Activated CD4-positive, alpha-beta memory T cell treated with anti-CD3 and anti-CD28 coated beads for 36 hours (primary cell): ENCODE measurements at regions of chr11 and their contacts with region 1.

Region 1: GRCh38 chr11:76721755-76722677 is 51.5 kb upstream of the LRRC32 start:
- DNase-seq: peak; percentile 85
- H3K4me3 Mint-ChIP-seq: no peak overlapping the region
- H3K27ac Mint-ChIP-seq: no peak overlapping the region
- H3K4me1 Mint-ChIP-seq: peaks cover 9% of the 10 kb centered on the region
- H3K27me3 Mint-ChIP-seq: peaks cover 10% of the 10 kb centered on the region

Region 2: GRCh38 chr11:76734456-76735420 is 12.7 kb after region 1 on chr11:
- CTCF ChIA-PET with region 1: interaction called, 80 read pairs
- POLR2A ChIA-PET with region 1: no interaction called
- intact Hi-C with region 1: no loop called
- DNase-seq: no peak
- H3K4me3 Mint-ChIP-seq: no peak overlapping the region
- H3K27ac Mint-ChIP-seq: no peak overlapping the region
- H3K4me1 Mint-ChIP-seq: no peaks in the 10 kb centered on the region
- H3K27me3 Mint-ChIP-seq: peaks cover 2% of the 10 kb centered on the region

Region 3: GRCh38 chr11:76782526-76783293 is 60.7 kb after region 1 on chr11:
- CTCF ChIA-PET with region 1: interaction called, 15 read pairs
- POLR2A ChIA-PET with region 1: no interaction called
- intact Hi-C with region 1: no loop called
- DNase-seq: peak; percentile 81
- H3K4me3 Mint-ChIP-seq: peak overlapping the region; percentile 66
- H3K27ac Mint-ChIP-seq: peak overlapping the region; percentile 85
- H3K4me1 Mint-ChIP-seq: peaks cover 17% of the 10 kb centered on the region
- H3K27me3 Mint-ChIP-seq: peaks cover 52% of the 10 kb centered on the region

Region 4: GRCh38 chr11:76799066-76799804 is 77.2 kb after region 1 on chr11:
- CTCF ChIA-PET with region 1: interaction called, 54 read pairs
- POLR2A ChIA-PET with region 1: no interaction called
- intact Hi-C with region 1: no loop called
- DNase-seq: peak; percentile 84
- H3K4me3 Mint-ChIP-seq: no peak overlapping the region
- H3K27ac Mint-ChIP-seq: no peak overlapping the region
- H3K4me1 Mint-ChIP-seq: peaks cover 17% of the 10 kb centered on the region
- H3K27me3 Mint-ChIP-seq: peaks cover 2% of the 10 kb centered on the region

Region 5: GRCh38 chr11:77047007-77047927 is 325.3 kb after region 1 on chr11:
- CTCF ChIA-PET with region 1: interaction called, 3 read pairs
- POLR2A ChIA-PET with region 1: no interaction called
- intact Hi-C with region 1: loop called (anchors 10 kb)
- DNase-seq: peak; percentile 81
- H3K4me3 Mint-ChIP-seq: peak overlapping the region; percentile 62
- H3K27ac Mint-ChIP-seq: peak overlapping the region; percentile 51
- H3K4me1 Mint-ChIP-seq: peaks cover 13% of the 10 kb centered on the region
- H3K27me3 Mint-ChIP-seq: peaks cover 6% of the 10 kb centered on the region